CD4-positive, alpha-beta memory T cell (primary cell): ENCODE measurements at regions of chr16 and their contacts with region 1.

Region 1: GRCh38 chr16:22374311-22375116 is at the start of gene CDR2:
- DNase-seq: peak; percentile 98 to 99 (median 98)
- H3K4me3 ChIP-seq: peak within 1 kb of the TSS; percentile 86 to 87
- H3K4me3 Mint-ChIP-seq: peak within 1 kb of the TSS; percentile 94 to 99 (median 98)
- H3K27ac ChIP-seq: peak within 1 kb of the TSS; percentile 78
- H3K27ac Mint-ChIP-seq: peak within 1 kb of the TSS; percentile 91 to 97 (median 94)
- H3K4me1 ChIP-seq: peaks cover 41% of the 10 kb centered on the region
- H3K4me1 Mint-ChIP-seq: peaks cover 25 to 56% (median 39%) of the 10 kb centered on the region in 4 donors
- H3K27me3 ChIP-seq: no peaks in the 10 kb centered on the region
- H3K27me3 Mint-ChIP-seq: no peaks in the 10 kb centered on the region
- total RNA-seq, gene CDR2: 94.2 to 99.3 TPM

Region 2: DNA sequence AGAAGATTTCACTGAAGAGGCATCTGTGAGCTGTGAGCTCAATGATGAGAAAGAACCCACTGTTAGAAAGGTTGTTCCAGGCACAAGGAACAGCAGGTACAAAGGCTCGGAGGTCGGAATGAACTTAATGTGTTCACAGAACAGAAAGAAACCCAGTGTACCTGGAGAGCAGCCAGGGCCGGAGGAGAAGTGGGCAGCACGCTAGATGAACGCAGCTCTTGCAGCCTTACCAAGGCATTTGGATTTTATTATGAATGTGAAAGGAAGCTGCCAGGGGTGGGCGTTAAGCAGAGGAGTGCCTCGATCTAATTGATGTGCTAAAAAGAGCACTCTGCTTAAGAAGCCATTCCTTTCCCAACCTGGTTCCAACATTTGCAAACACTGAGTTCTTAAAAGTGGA is 149.5 kb before region 1 on chr16:
- CTCF ChIA-PET with region 1: no interaction called
- POLR2A ChIA-PET with region 1: no interaction called
- intact Hi-C with region 1: no loop called
- DNase-seq: no peak
- H3K4me3 ChIP-seq: no peak overlapping the region
- H3K4me3 Mint-ChIP-seq: no peak overlapping the region
- H3K27ac ChIP-seq: no peak overlapping the region
- H3K27ac Mint-ChIP-seq: peak overlapping the region in 3 of 7 donors; percentile 55 to 77 (median 69)
- H3K4me1 ChIP-seq: no peaks in the 10 kb centered on the region
- H3K4me1 Mint-ChIP-seq: peaks cover 0 to 6% (median 5%) of the 10 kb centered on the region in 4 donors
- H3K27me3 ChIP-seq: no peaks in the 10 kb centered on the region
- H3K27me3 Mint-ChIP-seq: no peaks in the 10 kb centered on the region

Region 3: DNA sequence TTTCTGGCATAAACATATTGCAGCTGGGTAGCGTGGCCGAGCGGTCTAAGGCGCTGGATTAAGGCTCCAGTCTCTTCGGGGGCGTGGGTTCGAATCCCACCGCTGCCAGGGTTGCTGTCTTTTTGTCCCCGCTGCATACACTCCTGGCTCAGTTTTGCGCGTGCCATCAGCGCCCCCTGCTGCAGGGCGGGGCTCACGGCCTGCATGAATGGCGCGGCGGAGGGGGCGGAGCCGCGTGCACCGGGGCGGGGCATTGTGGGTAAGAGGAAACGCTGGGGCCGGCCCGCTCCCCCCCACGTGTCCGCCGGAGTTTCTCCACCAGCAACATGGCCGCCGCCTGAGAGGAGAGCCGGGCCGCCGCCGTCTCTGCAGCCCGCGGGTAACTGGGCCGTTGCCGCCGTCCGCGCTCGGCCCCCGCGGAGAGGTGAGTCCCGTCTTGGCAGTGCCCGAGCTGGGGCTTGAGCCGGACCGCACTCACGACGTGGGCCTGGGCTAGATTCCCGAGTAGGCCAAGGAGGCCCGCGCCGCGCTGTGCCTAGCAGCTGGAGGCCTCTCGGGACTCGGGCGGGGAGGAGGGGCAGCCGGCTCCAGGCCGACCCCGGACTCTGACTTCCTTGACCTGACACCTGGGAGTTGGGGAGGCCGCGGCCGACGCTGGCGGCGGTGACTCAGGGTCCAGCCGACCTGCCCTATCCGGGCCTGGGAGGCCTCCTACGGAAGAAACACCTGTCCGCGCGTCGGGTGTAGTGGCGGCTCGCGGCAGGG is 77.2 kb before region 1 on chr16 and contains the start of gene POLR3E:
- CTCF ChIA-PET with region 1: interaction called, 4 read pairs
- POLR2A ChIA-PET with region 1: interaction called, 10 read pairs
- intact Hi-C with region 1: no loop called
- DNase-seq: peak; percentile 98 to 100 (median 100)
- H3K4me3 ChIP-seq: peak within 1 kb of the TSS; percentile 76 to 91
- H3K4me3 Mint-ChIP-seq: peak within 1 kb of the TSS; percentile 89 to 97 (median 94)
- H3K27ac ChIP-seq: peak within 1 kb of the TSS; percentile 99
- H3K27ac Mint-ChIP-seq: peak within 1 kb of the TSS; percentile 97 to 100 (median 99)
- H3K4me1 ChIP-seq: peaks cover 37% of the 10 kb centered on the region
- H3K4me1 Mint-ChIP-seq: peaks cover 27 to 50% (median 39%) of the 10 kb centered on the region in 4 donors
- H3K27me3 ChIP-seq: no peaks in the 10 kb centered on the region
- H3K27me3 Mint-ChIP-seq: peaks cover 0 to 4% of the 10 kb centered on the region in 2 donors
- total RNA-seq, gene POLR3E: 88.4 to 94.0 TPM

Region 4: GRCh38 chr16:22328081-22328725 is 46.3 kb before region 1 on chr16:
- CTCF ChIA-PET with region 1: no interaction called
- POLR2A ChIA-PET with region 1: interaction called, 14 read pairs
- intact Hi-C with region 1: no loop called
- DNase-seq: no peak
- H3K4me3 ChIP-seq: no peak overlapping the region
- H3K4me3 Mint-ChIP-seq: no peak overlapping the region
- H3K27ac ChIP-seq: no peak overlapping the region
- H3K27ac Mint-ChIP-seq: peak overlapping the region in 3 of 7 donors; percentile 10 to 72 (median 50)
- H3K4me1 ChIP-seq: peaks cover 3% of the 10 kb centered on the region
- H3K4me1 Mint-ChIP-seq: peaks cover 8 to 26% (median 12%) of the 10 kb centered on the region in 4 donors
- H3K27me3 ChIP-seq: no peaks in the 10 kb centered on the region
- H3K27me3 Mint-ChIP-seq: no peaks in the 10 kb centered on the region

Region 5: GRCh38 chr16:22353191-22353919 is 21.2 kb before region 1 on chr16:
- CTCF ChIA-PET with region 1: interaction called, 16 read pairs
- POLR2A ChIA-PET with region 1: interaction called, 449 read pairs
- intact Hi-C with region 1: loop called (anchors 1 kb)
- DNase-seq: peak in 2 of 5 donors; percentile 15 to 60
- H3K4me3 ChIP-seq: no peak overlapping the region
- H3K4me3 Mint-ChIP-seq: peak overlapping the region in 6 of 8 donors; percentile 2 to 74 (median 36)
- H3K27ac ChIP-seq: peak overlapping the region; percentile 20
- H3K27ac Mint-ChIP-seq: peak overlapping the region; percentile 60 to 92 (median 80)
- H3K4me1 ChIP-seq: peaks cover 61% of the 10 kb centered on the region
- H3K4me1 Mint-ChIP-seq: peaks cover 39 to 67% (median 52%) of the 10 kb centered on the region in 4 donors
- H3K27me3 ChIP-seq: no peaks in the 10 kb centered on the region
- H3K27me3 Mint-ChIP-seq: no peaks in the 10 kb centered on the region